ENCODE measurements at regions of chr4 and their contacts with region 1.

Region 1: GRCh38 chr4:139301113-139301820 is at the start of gene NAA15:
- DNase-seq: peak; percentile 98
- ATAC-seq: peak; percentile 94
- H3K4me3 Mint-ChIP-seq: peak within 1 kb of the TSS; percentile 99
- H3K27ac Mint-ChIP-seq: peak within 1 kb of the TSS; percentile 100
- H3K4me1 Mint-ChIP-seq: peaks cover 58% of the 10 kb centered on the region
- H3K27me3 Mint-ChIP-seq: no peaks in the 10 kb centered on the region
- total RNA-seq, gene NAA15: 61.2 to 66.2 TPM

Region 2: GRCh38 chr4:139099366-139099982 is 201.8 kb before region 1 on chr4:
- CTCF ChIA-PET with region 1: interaction called, 28 read pairs
- POLR2A ChIA-PET with region 1: no interaction called
- DNase-seq: peak; percentile 82
- ATAC-seq: peak; percentile 65
- H3K4me3 Mint-ChIP-seq: no peak overlapping the region
- H3K27ac Mint-ChIP-seq: no peak overlapping the region
- H3K4me1 Mint-ChIP-seq: no peaks in the 10 kb centered on the region
- H3K27me3 Mint-ChIP-seq: no peaks in the 10 kb centered on the region

Region 3: DNA sequence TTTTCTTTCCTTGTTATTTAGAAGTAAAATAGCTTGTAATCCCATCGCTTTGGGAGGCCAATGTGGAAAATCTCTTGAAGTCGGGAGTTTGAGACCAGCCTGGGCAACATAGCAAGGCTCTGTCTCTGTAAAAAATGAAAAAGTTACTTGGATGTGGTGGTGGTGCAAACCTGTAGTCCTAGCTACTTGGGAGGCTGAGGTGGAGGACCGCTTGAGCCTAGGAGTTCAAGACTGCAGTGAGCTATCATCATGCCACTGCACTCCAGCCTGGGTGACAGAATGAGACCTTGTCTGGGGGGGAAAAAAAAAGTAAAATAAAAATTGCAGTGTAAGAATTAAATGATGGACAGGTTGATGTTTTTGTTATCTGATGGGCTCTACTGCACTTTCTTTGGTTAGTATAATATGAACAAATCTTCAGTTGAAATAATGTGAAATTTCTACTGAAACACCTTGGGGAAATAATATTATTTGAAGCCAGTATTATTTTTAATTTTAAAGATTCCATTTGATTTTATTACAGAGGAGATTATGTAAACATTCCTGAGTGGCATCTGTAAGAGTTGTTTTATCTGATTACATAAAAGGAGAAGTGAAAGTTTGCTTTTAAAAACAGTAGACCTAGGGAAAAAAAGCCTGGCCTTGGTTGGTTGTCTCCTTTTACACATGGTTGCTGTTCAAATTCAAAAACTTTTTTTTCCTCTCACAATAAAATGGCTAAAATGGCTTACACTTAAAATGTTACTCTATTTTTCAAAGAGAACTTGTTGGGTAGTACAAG is 11.5 kb after region 1 on chr4:
- CTCF ChIA-PET with region 1: interaction called, 16 read pairs
- POLR2A ChIA-PET with region 1: interaction called, 24 read pairs
- DNase-seq: no peak
- ATAC-seq: no peak
- H3K4me3 Mint-ChIP-seq: no peak overlapping the region
- H3K27ac Mint-ChIP-seq: peak overlapping the region; percentile 29
- H3K4me1 Mint-ChIP-seq: peaks cover 62% of the 10 kb centered on the region
- H3K27me3 Mint-ChIP-seq: no peaks in the 10 kb centered on the region

Region 4: DNA sequence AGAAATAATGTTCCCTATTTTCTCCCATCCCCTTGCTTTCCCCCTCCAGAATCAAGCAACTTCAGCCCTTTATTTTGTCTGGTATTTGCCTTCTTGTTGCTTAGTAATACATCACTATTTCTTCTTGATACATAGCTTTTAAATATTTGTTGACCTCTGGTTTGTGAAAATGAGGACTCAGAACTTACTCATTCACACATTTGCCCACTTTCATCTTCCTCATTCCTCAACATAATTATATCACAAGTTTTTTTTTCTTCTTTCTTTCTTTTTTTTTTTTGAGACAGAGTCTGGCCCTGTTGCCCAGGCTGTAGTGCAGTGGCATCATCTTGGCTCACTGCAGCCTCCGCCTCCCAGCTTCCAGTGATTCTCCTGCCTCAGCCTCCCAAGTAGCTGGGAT is 29.9 kb after region 1 on chr4:
- CTCF ChIA-PET with region 1: interaction called, 10 read pairs
- POLR2A ChIA-PET with region 1: interaction called, 11 read pairs
- DNase-seq: no peak
- ATAC-seq: no peak
- H3K4me3 Mint-ChIP-seq: no peak overlapping the region
- H3K27ac Mint-ChIP-seq: no peak overlapping the region
- H3K4me1 Mint-ChIP-seq: peaks cover 18% of the 10 kb centered on the region
- H3K27me3 Mint-ChIP-seq: no peaks in the 10 kb centered on the region

Measured in activated CD8-positive, alpha-beta T cell treated with anti-CD3 and anti-CD28 coated beads, Interleukin-2, amount 10 ng/mL, durations not matched to agents 7 days and 5 days (primary cell).